KBM-7 (cell line): ENCODE measurements at regions of chr7 and their contacts with region 1.

Region 1: GRCh38 chr7:47818796-47819606 is 129.3 kb downstream of the PKD1L1 start:
- DNase-seq: peak; percentile 67

Region 2: GRCh38 chr7:47371729-47372368 is 447.2 kb before region 1 on chr7:
- in situ Hi-C with region 1: no loop called
- DNase-seq: no peak

Region 3: GRCh38 chr7:47474937-47475878 is 343.8 kb before region 1 on chr7:
- in situ Hi-C with region 1: loop called (anchors 25 kb)
- DNase-seq: peak; percentile 93